GM10248 (cell line): ENCODE measurements at regions of chr5 and their contacts with region 1.

Region 1: DNA sequence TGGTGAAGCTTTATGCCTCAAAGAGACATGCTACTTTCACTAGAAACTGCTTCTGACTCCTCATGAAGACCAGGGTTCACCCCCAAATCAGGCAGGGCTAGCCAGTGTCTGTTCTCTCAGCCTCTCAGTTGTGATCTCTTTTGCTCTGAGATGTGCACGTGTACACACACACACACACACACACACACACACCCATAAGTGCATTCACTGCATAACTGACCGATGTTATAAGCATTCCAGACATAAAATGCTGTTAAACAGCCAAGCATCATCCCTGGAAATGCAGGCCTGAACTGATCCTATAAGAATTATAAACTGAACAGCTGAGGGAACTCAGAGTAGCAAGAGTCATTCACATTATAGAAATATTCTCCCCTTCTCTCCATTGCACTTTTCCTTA is 85.0 kb downstream of the FSTL4 start:
- DNase-seq: no peak
- CTCF ChIP-seq: no peak

Region 2: GRCh38 chr5:133353741-133354140 is 173.6 kb before region 1 on chr5:
- CTCF ChIA-PET with region 1: no interaction called
- POLR2A ChIA-PET with region 1: no interaction called
- DNase-seq: no peak
- CTCF ChIP-seq: no peak

Region 3: GRCh38 chr5:133415506-133415905 is 111.8 kb before region 1 on chr5:
- CTCF ChIA-PET with region 1: no interaction called
- POLR2A ChIA-PET with region 1: no interaction called
- DNase-seq: no peak
- CTCF ChIP-seq: no peak

Region 4: DNA sequence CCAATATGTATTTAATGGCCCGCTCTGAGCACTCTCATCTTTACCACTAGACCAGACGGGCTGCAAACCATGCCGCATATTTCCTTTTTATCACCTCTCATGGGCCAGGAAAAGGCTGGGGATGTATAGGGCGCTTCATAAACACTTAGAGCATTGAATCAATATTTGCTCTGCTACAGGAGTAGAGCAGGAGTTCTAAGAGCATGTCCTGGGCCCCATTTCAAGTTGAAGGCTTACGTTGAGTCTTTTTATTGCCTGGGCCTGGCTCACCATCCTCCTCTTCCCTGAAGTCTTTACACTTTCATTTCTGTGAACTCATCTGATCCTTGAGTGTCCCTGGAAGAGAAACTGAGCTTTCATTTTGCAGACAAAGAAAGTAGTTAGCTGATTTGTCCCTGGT is 27.4 kb before region 1 on chr5:
- CTCF ChIA-PET with region 1: no interaction called
- POLR2A ChIA-PET with region 1: no interaction called
- DNase-seq: no peak
- CTCF ChIP-seq: no peak

Region 5: DNA sequence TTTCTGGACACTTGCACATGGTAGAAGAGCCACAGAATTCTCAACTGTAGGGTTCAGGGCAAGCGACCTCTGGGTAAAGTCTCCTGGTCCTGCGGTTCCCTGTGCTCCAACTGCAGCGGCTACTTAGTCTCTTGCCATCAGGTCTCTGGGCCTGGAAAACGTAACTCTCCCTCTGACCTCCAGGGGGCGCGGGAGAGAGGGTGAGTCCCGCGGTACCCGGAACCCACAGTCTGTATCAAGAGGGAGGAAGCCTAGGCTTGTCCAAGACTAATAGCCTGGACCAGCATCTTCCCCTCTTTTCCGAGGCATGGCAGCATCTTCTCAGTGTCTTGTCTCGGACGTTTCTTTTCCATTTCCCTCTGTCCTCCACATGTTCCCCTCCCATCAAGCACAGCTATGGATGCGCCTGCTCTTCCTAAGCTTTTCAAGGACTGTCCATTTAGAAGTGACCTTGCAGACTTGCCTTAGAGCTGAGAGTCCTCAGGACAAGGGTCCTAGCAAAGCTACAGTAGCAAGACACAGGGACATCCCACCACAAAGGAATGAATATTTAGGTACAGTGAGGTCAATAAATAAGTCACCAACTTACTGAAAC is 25.7 kb after region 1 on chr5:
- CTCF ChIA-PET with region 1: interaction called, 10 read pairs
- POLR2A ChIA-PET with region 1: no interaction called
- DNase-seq: peak; percentile 63
- CTCF ChIP-seq: peak; percentile 67

Region 6: GRCh38 chr5:133664402-133664801 is 137.1 kb after region 1 on chr5:
- CTCF ChIA-PET with region 1: no interaction called
- POLR2A ChIA-PET with region 1: no interaction called
- DNase-seq: no peak
- CTCF ChIP-seq: no peak